ENCODE measurements at regions of chr3 and their contacts with region 1.

Region 1: GRCh38 chr3:138935848-138936740 is 10.8 kb downstream of the FOXL2 start:
- DNase-seq: peak; percentile 78
- H3K4me3 Mint-ChIP-seq: peak overlapping the region; percentile 71
- H3K27ac Mint-ChIP-seq: no peak overlapping the region
- H3K4me1 Mint-ChIP-seq: peaks cover 34% of the 10 kb centered on the region
- H3K27me3 Mint-ChIP-seq: peaks cover 70% of the 10 kb centered on the region

Region 2: GRCh38 chr3:138509586-138509985 is 426.5 kb before region 1 on chr3:
- CTCF ChIA-PET with region 1: no interaction called
- intact Hi-C with region 1: no loop called
- DNase-seq: no peak
- H3K4me3 Mint-ChIP-seq: no peak overlapping the region
- H3K27ac Mint-ChIP-seq: no peak overlapping the region
- H3K4me1 Mint-ChIP-seq: peaks cover 6% of the 10 kb centered on the region
- H3K27me3 Mint-ChIP-seq: no peaks in the 10 kb centered on the region

Region 3: DNA sequence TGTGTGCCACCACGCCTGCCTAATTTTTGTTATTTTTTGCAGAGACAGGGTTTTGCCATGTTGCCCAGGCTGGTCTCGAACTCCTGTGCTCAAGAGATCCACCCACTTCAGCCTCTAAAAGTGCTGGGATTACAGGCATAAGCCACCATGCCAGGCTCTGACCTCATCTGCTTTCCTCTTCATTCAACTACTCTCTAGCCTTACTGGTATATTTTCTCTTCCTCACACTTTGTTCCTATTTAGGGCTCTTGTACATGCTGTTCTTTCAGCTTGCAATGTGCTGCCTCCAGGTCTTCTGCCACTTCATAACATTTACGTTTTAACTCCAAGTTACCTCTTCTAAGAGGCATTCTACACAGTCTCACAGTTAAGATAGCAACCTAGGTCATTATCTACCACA is 136.3 kb before region 1 on chr3:
- CTCF ChIA-PET with region 1: no interaction called
- intact Hi-C with region 1: no loop called
- DNase-seq: no peak
- H3K4me3 Mint-ChIP-seq: no peak overlapping the region
- H3K27ac Mint-ChIP-seq: no peak overlapping the region
- H3K4me1 Mint-ChIP-seq: peaks cover 29% of the 10 kb centered on the region
- H3K27me3 Mint-ChIP-seq: no peaks in the 10 kb centered on the region

Region 4: DNA sequence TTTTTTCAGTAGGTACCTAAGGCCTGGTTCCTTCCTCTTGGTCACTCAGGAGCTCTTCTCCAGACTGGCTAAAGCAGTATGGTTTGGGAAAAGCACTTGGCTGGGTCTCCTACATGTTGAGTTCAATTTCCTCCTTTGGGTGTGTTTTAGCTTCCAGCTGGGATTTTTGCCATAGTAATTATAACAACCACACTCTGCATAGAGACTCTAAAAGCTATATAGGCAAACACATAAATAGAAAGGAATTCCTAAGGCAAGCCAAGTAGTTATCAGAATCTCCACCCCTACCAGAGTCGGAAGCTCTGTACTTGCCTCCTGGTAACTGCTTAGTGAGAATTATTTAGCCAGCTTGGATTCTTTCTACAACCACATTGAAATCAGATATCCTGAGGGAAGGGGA is 37.8 kb before region 1 on chr3:
- CTCF ChIA-PET with region 1: no interaction called
- intact Hi-C with region 1: no loop called
- DNase-seq: no peak
- H3K4me3 Mint-ChIP-seq: no peak overlapping the region
- H3K27ac Mint-ChIP-seq: no peak overlapping the region
- H3K4me1 Mint-ChIP-seq: no peaks in the 10 kb centered on the region
- H3K27me3 Mint-ChIP-seq: no peaks in the 10 kb centered on the region

Region 5: GRCh38 chr3:138946181-138947059 is 10.3 kb after region 1 on chr3:
- CTCF ChIA-PET with region 1: interaction called, 14 read pairs
- intact Hi-C with region 1: loop called (anchors 1 kb)
- DNase-seq: peak; percentile 43
- H3K4me3 Mint-ChIP-seq: peak overlapping the region; percentile 67
- H3K27ac Mint-ChIP-seq: no peak overlapping the region
- H3K4me1 Mint-ChIP-seq: peaks cover 32% of the 10 kb centered on the region
- H3K27me3 Mint-ChIP-seq: peaks cover 82% of the 10 kb centered on the region

Region 6: GRCh38 chr3:138960417-138960852 is 24.3 kb after region 1 on chr3:
- CTCF ChIA-PET with region 1: interaction called, 4 read pairs
- intact Hi-C with region 1: loop called (anchors 2 kb)
- DNase-seq: no peak
- H3K4me3 Mint-ChIP-seq: no peak overlapping the region
- H3K27ac Mint-ChIP-seq: no peak overlapping the region
- H3K4me1 Mint-ChIP-seq: peaks cover 12% of the 10 kb centered on the region
- H3K27me3 Mint-ChIP-seq: peaks cover 43% of the 10 kb centered on the region

Region 7: DNA sequence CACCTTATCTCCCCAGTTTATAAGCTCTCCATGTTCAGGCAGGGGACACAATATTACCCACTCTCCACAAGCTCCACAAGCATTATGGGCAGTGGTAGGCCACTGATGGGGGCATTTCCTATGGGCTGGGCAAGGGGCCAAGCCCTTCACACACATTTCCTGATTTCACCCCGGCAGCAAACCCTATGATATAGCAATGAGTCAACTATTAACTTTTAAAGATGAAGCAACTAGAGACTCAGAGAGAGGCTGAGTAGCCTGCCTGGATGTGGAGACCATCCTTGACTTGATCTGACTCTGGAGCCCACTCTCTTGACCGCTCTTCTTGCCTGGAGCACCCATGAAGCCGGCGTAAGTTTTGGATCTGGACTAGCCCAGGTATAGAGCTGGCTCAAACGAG is 38.4 kb after region 1 on chr3:
- CTCF ChIA-PET with region 1: interaction called, 10 read pairs
- intact Hi-C with region 1: loop called (anchors 1 kb)
- DNase-seq: no peak
- H3K4me3 Mint-ChIP-seq: no peak overlapping the region
- H3K27ac Mint-ChIP-seq: no peak overlapping the region
- H3K4me1 Mint-ChIP-seq: no peaks in the 10 kb centered on the region
- H3K27me3 Mint-ChIP-seq: peaks cover 19% of the 10 kb centered on the region

Region 8: DNA sequence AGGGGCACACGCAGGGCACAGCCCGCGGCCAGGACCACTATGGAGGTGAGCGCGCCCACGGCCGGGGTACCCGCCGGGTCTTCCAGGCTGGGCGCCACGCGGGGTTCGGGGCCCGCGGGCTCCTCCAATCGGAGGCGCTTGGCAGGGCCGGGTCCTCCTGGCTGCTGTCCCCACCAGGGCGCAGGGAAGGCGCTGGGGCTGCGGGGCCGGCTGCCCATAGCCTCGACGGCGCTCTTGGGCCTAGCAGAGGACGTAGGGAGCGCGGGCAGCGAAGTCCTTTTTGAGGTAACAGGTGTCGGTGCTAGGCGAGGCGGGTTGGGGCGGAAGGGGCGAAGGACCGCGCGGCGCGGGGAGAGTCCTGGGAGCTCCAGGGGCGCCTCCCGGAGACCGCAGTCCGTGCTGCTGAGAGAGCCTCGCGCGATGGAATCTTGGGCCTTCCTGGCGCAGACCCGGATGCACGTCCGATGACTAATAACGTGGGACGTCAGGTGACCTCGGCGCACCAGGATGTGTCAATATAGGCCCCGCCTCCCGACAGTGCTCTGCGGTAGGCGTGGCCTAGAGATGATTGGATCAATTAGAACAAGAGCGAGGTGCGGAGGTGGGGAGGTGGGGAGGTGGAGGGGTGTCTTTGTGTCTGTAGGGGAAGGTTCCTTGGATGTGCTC is 70.1 kb after region 1 on chr3 and contains the start of gene PRR23A:
- CTCF ChIA-PET with region 1: no interaction called
- intact Hi-C with region 1: no loop called
- DNase-seq: no peak
- H3K4me3 Mint-ChIP-seq: no peak within 1 kb of the TSS
- H3K27ac Mint-ChIP-seq: no peak within 1 kb of the TSS
- H3K4me1 Mint-ChIP-seq: no peaks in the 10 kb centered on the region
- H3K27me3 Mint-ChIP-seq: peaks cover 14% of the 10 kb centered on the region
- total RNA-seq, gene PRR23A: not detected

Region 9: GRCh38 chr3:139329345-139329850 is 393.3 kb after region 1 on chr3:
- CTCF ChIA-PET with region 1: interaction called, 8 read pairs
- intact Hi-C with region 1: loop called (anchors 1 kb)
- DNase-seq: peak; percentile 93
- H3K4me3 Mint-ChIP-seq: peak overlapping the region; percentile 46
- H3K27ac Mint-ChIP-seq: no peak overlapping the region
- H3K4me1 Mint-ChIP-seq: peaks cover 15% of the 10 kb centered on the region
- H3K27me3 Mint-ChIP-seq: peaks cover 28% of the 10 kb centered on the region